HepG2 (cell line): ENCODE measurements at regions of chr13 and their contacts with region 1.

Region 1: DNA sequence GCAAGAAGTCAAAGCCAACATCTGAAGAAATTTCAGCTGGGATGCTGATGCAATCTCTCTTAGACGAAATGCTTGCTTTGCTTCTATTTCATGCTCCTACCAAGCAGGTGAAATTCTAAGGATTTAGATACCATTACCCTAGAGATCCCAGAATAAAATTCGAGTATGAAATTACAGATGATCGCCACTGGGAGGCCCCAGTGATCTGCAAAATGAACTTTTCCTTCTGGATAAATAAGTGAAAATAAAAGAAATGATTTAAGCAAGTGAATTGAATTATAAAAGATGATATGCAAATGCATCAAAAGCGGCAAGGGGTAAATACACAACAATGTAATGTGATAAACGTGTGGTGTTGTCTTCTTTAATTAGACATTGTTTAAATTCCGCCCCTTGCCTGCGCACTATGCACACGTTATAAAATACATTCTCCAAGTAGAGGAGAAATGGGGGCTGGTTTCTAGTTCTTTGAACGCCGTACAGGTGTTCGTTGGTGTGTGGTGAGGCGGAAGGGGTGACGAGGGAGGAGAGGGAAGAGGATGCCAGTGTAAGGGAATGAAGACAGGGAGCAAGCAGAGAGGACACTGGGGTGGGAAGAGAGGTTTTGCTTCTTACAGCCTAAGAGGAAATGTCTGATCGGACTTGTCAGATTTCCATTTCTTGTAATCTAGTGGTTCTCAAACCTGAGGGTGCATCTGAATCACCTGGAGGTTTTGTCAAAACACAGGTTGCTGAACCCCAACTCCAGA is 58.0 kb downstream of the ERCC5 start:
- DNase-seq: no peak
- ATAC-seq: peak; percentile 46
- H3K4me3 ChIP-seq: no peak overlapping the region
- H3K27ac ChIP-seq: no peak overlapping the region
- H3K4me1 ChIP-seq: peaks cover 55% of the 10 kb centered on the region
- H3K27me3 ChIP-seq: no peaks in the 10 kb centered on the region
- CTCF ChIP-seq: no peak
- EP300 ChIP-seq: no peak
- POLR2A ChIP-seq: no peak
- RAD21 ChIP-seq: no peak

Region 2: DNA sequence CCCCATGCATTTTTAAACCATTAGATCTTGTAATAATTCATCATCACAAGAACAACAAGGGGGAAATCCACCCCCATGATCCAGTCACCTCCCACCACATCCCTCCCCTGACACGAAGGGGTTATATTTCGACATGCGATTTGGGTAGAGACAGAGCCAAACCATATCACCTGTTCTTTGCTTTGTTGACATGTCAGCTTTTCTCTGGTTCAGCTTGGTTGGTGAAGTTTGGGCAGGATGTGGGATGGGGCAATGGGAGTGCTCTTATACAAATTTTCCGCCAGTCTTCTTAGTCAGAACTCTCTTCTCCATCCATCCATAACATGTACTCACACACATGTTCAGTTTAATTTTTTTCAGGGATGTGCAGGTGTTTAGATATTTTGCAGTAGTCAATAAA is 294.1 kb before region 1 on chr13:
- CTCF ChIA-PET with region 1: no interaction called
- POLR2A ChIA-PET with region 1: no interaction called
- in situ Hi-C with region 1: no loop called
- intact Hi-C with region 1: no loop called
- DNase-seq: no peak
- ATAC-seq: no peak
- H3K4me3 ChIP-seq: no peak overlapping the region
- H3K27ac ChIP-seq: no peak overlapping the region
- H3K4me1 ChIP-seq: no peaks in the 10 kb centered on the region
- H3K27me3 ChIP-seq: no peaks in the 10 kb centered on the region
- CTCF ChIP-seq: no peak
- EP300 ChIP-seq: no peak
- POLR2A ChIP-seq: no peak
- RAD21 ChIP-seq: no peak

Region 3: GRCh38 chr13:102870677-102871415 is 33.0 kb before region 1 on chr13:
- CTCF ChIA-PET with region 1: no interaction called
- POLR2A ChIA-PET with region 1: no interaction called
- in situ Hi-C with region 1: no loop called
- intact Hi-C with region 1: loop called (anchors 2 kb)
- DNase-seq: peak; percentile 39
- ATAC-seq: peak; percentile 94
- H3K4me3 ChIP-seq: no peak overlapping the region
- H3K27ac ChIP-seq: no peak overlapping the region
- H3K4me1 ChIP-seq: no peaks in the 10 kb centered on the region
- H3K27me3 ChIP-seq: no peaks in the 10 kb centered on the region
- CTCF ChIP-seq: peak; percentile 81
- EP300 ChIP-seq: no peak
- POLR2A ChIP-seq: no peak
- RAD21 ChIP-seq: peak; percentile 66

Region 4: DNA sequence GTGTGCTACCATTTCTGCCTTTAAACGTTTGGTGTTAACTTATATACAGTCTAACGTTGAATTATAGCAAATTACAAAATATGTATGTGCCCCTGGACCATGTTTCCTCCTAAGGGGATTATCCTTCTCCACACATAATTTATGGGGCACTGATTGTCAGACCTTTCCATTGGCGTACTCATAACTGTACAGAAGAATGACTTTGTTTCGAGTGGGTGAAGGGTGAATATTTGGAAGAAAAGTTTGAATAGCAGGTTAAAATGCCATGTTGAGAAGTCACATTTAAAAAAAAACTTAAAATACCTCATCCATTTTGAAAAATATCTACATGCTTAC is 103.6 kb after region 1 on chr13:
- CTCF ChIA-PET with region 1: no interaction called
- POLR2A ChIA-PET with region 1: no interaction called
- in situ Hi-C with region 1: no loop called
- intact Hi-C with region 1: no loop called
- DNase-seq: no peak
- ATAC-seq: no peak
- H3K4me3 ChIP-seq: no peak overlapping the region
- H3K27ac ChIP-seq: no peak overlapping the region
- H3K4me1 ChIP-seq: no peaks in the 10 kb centered on the region
- H3K27me3 ChIP-seq: no peaks in the 10 kb centered on the region
- CTCF ChIP-seq: no peak
- EP300 ChIP-seq: no peak
- POLR2A ChIP-seq: no peak
- RAD21 ChIP-seq: no peak